Panc1 (cell line): ENCODE measurements at regions of chr7 and their contacts with region 1.

Region 1: GRCh38 chr7:105943486-105943885 is 19.6 kb upstream of the CDHR3 start:
- DNase-seq: no peak
- ATAC-seq: no peak
- H3K4me3 ChIP-seq: no peak overlapping the region
- H3K27ac ChIP-seq: no peak overlapping the region
- H3K4me1 ChIP-seq: no peaks in the 10 kb centered on the region
- H3K27me3 ChIP-seq: no peaks in the 10 kb centered on the region
- CTCF ChIP-seq: no peak

Region 2: DNA sequence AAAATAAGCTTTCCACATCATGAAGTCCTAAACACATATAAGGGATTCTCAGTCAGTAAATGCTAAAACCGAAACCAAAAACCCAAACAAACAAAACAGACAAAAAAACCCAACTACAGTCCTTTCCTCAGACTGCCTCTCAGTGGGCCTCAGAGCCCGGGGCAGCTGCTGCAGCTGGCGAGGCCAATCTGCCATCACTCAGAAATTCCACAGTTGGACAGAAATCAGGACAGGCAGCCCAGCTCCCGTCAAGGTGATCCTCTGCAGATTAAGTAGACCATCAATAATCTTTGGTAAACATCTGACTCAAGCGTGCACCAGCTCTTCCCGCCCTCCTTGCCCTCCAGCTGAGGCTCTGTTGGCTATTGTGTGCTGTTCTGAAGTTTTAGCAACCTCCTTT is 209.3 kb before region 1 on chr7:
- CTCF ChIA-PET with region 1: no interaction called
- POLR2A ChIA-PET with region 1: no interaction called
- in situ Hi-C with region 1: no loop called
- intact Hi-C with region 1: no loop called
- DNase-seq: no peak
- ATAC-seq: no peak
- H3K4me3 ChIP-seq: no peak overlapping the region
- H3K27ac ChIP-seq: no peak overlapping the region
- H3K4me1 ChIP-seq: no peaks in the 10 kb centered on the region
- H3K27me3 ChIP-seq: no peaks in the 10 kb centered on the region
- CTCF ChIP-seq: no peak

Region 3: GRCh38 chr7:106840342-106840741 is 896.9 kb after region 1 on chr7:
- CTCF ChIA-PET with region 1: no interaction called
- POLR2A ChIA-PET with region 1: interaction called, 10 read pairs
- in situ Hi-C with region 1: no loop called
- intact Hi-C with region 1: no loop called
- DNase-seq: no peak
- ATAC-seq: no peak
- H3K4me3 ChIP-seq: no peak overlapping the region
- H3K27ac ChIP-seq: no peak overlapping the region
- H3K4me1 ChIP-seq: no peaks in the 10 kb centered on the region
- H3K27me3 ChIP-seq: no peaks in the 10 kb centered on the region
- CTCF ChIP-seq: no peak